Activated CD4-positive, alpha-beta memory T cell treated with anti-CD3 and anti-CD28 coated beads for 36 hours (primary cell): ENCODE measurements at regions of chr9 and their contacts with region 1.

Region 1: GRCh38 chr9:85610074-85610860 is 131.5 kb downstream of the AGTPBP1 start:
- DNase-seq: peak; percentile 19
- H3K4me3 Mint-ChIP-seq: peak overlapping the region; percentile 17
- H3K27ac Mint-ChIP-seq: peak overlapping the region; percentile 1
- H3K4me1 Mint-ChIP-seq: peaks cover 6% of the 10 kb centered on the region
- H3K27me3 Mint-ChIP-seq: no peaks in the 10 kb centered on the region

Region 2: GRCh38 chr9:85359161-85359560 is 251.1 kb before region 1 on chr9:
- CTCF ChIA-PET with region 1: no interaction called
- POLR2A ChIA-PET with region 1: no interaction called
- intact Hi-C with region 1: no loop called
- DNase-seq: no peak
- H3K4me3 Mint-ChIP-seq: no peak overlapping the region
- H3K27ac Mint-ChIP-seq: no peak overlapping the region
- H3K4me1 Mint-ChIP-seq: no peaks in the 10 kb centered on the region
- H3K27me3 Mint-ChIP-seq: peaks cover 7% of the 10 kb centered on the region

Region 3: GRCh38 chr9:85569988-85570387 is 40.3 kb before region 1 on chr9:
- CTCF ChIA-PET with region 1: interaction called, 10 read pairs
- POLR2A ChIA-PET with region 1: no interaction called
- intact Hi-C with region 1: no loop called
- DNase-seq: no peak
- H3K4me3 Mint-ChIP-seq: no peak overlapping the region
- H3K27ac Mint-ChIP-seq: no peak overlapping the region
- H3K4me1 Mint-ChIP-seq: no peaks in the 10 kb centered on the region
- H3K27me3 Mint-ChIP-seq: no peaks in the 10 kb centered on the region